ENCODE measurements at regions of chrX and their contacts with region 1.

Region 1: DNA sequence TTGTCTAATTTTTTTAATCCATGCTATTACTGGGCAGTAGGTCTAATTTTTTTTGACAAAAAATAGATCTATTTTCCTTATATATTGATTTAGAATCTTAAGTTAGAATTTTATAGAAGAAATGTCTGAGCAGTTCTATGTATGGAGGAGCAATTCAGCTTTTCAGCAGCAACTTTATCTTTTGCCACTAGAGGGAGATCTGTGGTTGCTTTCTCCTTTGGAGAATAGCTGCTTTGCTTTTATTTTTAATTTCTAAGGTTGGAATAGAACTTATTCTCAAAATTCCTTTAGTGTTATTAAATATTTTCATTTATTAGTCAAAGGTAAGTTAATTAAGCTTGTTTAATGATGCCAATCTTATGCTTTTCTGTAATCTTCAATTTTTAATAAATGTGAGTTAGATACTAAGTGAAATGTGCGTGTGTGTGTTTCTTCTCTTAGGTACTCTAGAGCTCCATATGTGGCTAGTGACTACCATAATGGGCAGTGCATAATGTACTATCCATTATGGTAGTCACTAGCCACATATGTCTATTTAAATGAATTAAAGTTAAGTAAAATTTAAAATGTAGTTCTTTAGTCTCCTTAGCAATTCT is 29.3 kb downstream of the FAM199X start:
- H3K4me3 ChIP-seq: no peak overlapping the region
- H3K27ac ChIP-seq: no peak overlapping the region
- H3K4me1 ChIP-seq: no peaks in the 10 kb centered on the region
- CTCF ChIP-seq: no peak

Region 2: GRCh38 chrX:104211187-104211586 is 15.6 kb after region 1 on chrX:
- CTCF ChIA-PET with region 1: interaction called, 18 read pairs
- POLR2A ChIA-PET with region 1: no interaction called
- H3K4me3 ChIP-seq: no peak overlapping the region
- H3K27ac ChIP-seq: no peak overlapping the region
- H3K4me1 ChIP-seq: no peaks in the 10 kb centered on the region
- CTCF ChIP-seq: no peak

Region 3: DNA sequence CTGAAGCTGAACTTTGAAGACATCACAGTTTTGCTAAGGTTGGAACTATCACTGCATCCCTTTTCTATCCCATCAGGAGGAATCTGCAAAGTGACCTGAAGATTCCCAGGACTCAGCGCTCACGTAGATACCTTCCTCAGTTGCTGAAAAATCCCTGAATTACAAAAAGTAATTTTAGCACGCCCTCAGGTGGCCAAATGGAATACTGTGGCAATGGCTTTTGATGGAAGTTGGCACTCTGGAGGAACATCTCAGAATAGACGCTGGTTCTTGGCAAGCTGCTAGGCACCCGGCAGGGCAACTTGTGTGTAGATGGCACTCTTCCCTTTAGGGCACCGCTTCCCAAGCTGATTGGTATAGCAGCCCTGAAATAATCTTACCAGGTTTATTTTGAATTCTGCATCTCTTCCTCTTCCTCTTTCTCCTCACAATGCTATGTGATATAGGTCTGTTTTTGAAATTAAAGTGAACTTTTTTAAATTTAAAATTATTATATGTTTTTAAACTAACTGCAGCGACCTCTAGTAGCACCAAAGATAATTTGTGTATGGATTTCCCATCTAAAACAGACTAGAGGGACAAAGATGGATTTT is 75.4 kb after region 1 on chrX:
- CTCF ChIA-PET with region 1: interaction called, 113 read pairs
- POLR2A ChIA-PET with region 1: no interaction called
- H3K4me3 ChIP-seq: no peak overlapping the region
- H3K27ac ChIP-seq: no peak overlapping the region
- H3K4me1 ChIP-seq: no peaks in the 10 kb centered on the region
- CTCF ChIP-seq: peak; percentile 64; the same call in 1 of the 2 replicates